ENCODE measurements at regions of chr11 and their contacts with region 1.

Region 1: DNA sequence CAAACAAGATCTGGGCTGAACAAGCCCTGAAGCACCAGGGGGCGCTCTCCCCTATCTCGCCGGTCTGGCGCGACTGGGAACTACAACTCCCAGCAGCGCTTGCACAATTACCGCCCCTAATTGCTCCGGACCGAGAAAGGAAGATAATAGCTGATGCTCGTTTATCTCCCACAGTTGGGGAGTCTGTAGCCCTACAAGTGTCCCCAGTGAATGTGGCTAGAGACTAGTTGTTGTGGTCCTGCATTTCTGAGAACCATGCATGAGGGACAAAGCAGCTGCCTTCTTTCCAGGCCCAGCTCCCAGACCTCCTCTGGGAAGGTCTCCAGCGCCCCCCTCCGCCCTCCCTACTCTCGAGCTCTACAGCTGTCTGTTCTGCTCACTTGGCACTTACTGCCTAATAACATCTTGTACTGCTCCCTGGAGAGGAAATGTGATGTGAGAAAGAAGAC is 34.4 kb downstream of the NRXN2 start:
- DNase-seq: peak; percentile 90 to 99
- H3K4me3 ChIP-seq: peak overlapping the region; percentile 50 to 83 (median 80); a peak in 7 of 8 replicates
- H3K27ac ChIP-seq: no peak overlapping the region
- H3K4me1 ChIP-seq: peaks cover 0 to 4% (median 0%) of the 10 kb centered on the region in 4 experiments; a peak in 2 of 7 replicates
- H3K27me3 ChIP-seq: no peaks in the 10 kb centered on the region
- CTCF ChIP-seq: peak; percentile 85 to 98 (median 92)
- EP300 ChIP-seq: no peak
- POLR2A ChIP-seq: no peak
- RAD21 ChIP-seq: peak; percentile 63 to 69

Region 2: DNA sequence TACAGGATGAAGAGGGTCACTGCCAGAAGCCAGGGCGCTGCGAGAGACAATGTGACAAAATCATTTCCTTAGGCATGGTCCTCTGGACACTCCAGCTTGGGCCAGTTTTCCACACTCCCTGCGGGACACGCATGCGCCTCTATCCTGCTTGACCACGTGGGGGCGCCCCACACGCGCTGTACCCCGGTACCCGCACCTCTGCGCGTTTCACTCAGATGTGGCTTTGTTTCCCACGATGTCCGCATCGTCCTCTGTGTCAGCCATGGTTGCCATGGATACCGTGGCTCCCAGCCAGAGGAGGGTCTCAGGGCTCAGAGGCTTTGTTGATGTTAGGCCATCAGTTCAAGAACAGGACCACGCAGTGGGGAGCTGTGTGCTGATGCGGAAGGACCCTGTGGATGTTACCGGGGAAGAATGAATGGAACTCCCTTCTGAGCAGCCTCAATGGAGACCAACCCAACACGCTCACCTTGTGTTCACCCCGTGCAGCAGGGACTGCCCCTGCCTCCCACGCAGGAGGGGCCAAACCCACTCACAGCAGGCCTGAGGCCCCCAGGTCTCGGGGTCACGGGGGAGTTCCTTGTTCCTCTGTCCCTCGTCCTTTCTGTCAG is 198.6 kb before region 1 on chr11:
- CTCF ChIA-PET with region 1: interaction called, 10 read pairs
- POLR2A ChIA-PET with region 1: no interaction called
- DNase-seq: peak; percentile 5 to 90
- H3K4me3 ChIP-seq: no peak overlapping the region
- H3K27ac ChIP-seq: no peak overlapping the region
- H3K4me1 ChIP-seq: no peaks in the 10 kb centered on the region; a peak in 2 of 7 replicates
- H3K27me3 ChIP-seq: peaks cover 3 to 21% (median 13%) of the 10 kb centered on the region in 4 experiments
- CTCF ChIP-seq: peak; percentile 82 to 95 (median 93)
- EP300 ChIP-seq: no peak
- POLR2A ChIP-seq: no peak
- RAD21 ChIP-seq: peak; percentile 89 to 91

Region 3: DNA sequence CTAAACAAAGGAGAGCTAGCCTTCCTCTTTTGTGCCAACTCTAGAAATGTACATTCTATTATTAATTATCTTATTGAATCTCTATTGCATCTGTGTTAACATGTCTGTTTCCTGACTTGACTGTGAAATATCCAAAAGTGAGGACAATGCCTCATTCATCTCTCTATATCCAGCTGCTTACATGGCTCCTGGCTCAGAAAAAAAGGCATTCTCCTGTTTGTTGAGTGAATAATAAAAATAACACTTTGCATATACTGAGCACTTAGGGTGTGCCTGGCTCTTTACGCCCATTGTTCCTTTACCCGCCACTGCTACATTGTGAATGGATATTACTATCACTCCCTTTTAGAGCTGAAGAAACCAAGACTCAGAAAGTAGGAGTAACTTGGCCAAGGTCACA is 14.5 kb after region 1 on chr11:
- CTCF ChIA-PET with region 1: interaction called, 41 read pairs
- POLR2A ChIA-PET with region 1: interaction called, 3 read pairs
- DNase-seq: no peak
- H3K4me3 ChIP-seq: no peak overlapping the region
- H3K27ac ChIP-seq: no peak overlapping the region
- H3K4me1 ChIP-seq: peaks cover 0 to 3% (median 2%) of the 10 kb centered on the region in 4 experiments; a peak in 3 of 7 replicates
- H3K27me3 ChIP-seq: 0 out of 7 replicates have a peak, but pooled peaks cover 0 to 2% (median 0%) of the 10 kb centered on the region in 4 experiments
- CTCF ChIP-seq: no peak
- EP300 ChIP-seq: no peak
- POLR2A ChIP-seq: no peak
- RAD21 ChIP-seq: no peak

Region 4: GRCh38 chr11:64723907-64724862 is 35.6 kb after region 1 on chr11:
- CTCF ChIA-PET with region 1: interaction called, 29 read pairs
- POLR2A ChIA-PET with region 1: interaction called, 5 read pairs
- DNase-seq: no peak
- H3K4me3 ChIP-seq: peak overlapping the region in 1 of 4 experiments; percentile 83; a peak in 4 of 8 replicates
- H3K27ac ChIP-seq: no peak overlapping the region
- H3K4me1 ChIP-seq: peaks cover 10 to 33% (median 25%) of the 10 kb centered on the region in 4 experiments
- H3K27me3 ChIP-seq: peaks cover 7 to 20% (median 16%) of the 10 kb centered on the region in 4 experiments
- CTCF ChIP-seq: no peak
- EP300 ChIP-seq: no peak
- POLR2A ChIP-seq: no peak
- RAD21 ChIP-seq: no peak

Region 5: GRCh38 chr11:64742889-64743590 is 54.5 kb after region 1 on chr11:
- CTCF ChIA-PET with region 1: interaction called, 41 read pairs
- POLR2A ChIA-PET with region 1: no interaction called
- DNase-seq: peak in 1 of 2 experiments; percentile 94
- H3K4me3 ChIP-seq: peak overlapping the region; percentile 46 to 67 (median 57)
- H3K27ac ChIP-seq: no peak overlapping the region
- H3K4me1 ChIP-seq: peaks cover 4 to 33% (median 29%) of the 10 kb centered on the region in 4 experiments
- H3K27me3 ChIP-seq: peaks cover 0 to 32% (median 19%) of the 10 kb centered on the region in 4 experiments; a peak in 5 of 7 replicates
- CTCF ChIP-seq: peak in 2 of 3 experiments; percentile 74; a peak in 3 of 4 replicates
- EP300 ChIP-seq: no peak
- POLR2A ChIP-seq: 0 out of 3 replicates have a peak, but pooled peaks of 1 of the 2 experiments have one; percentile 14
- RAD21 ChIP-seq: peak; percentile 56 to 74

Region 6: GRCh38 chr11:64772303-64773018 is 83.9 kb after region 1 on chr11:
- CTCF ChIA-PET with region 1: no interaction called
- POLR2A ChIA-PET with region 1: no interaction called
- DNase-seq: no peak
- H3K4me3 ChIP-seq: no peak overlapping the region
- H3K27ac ChIP-seq: no peak overlapping the region
- H3K4me1 ChIP-seq: peaks cover 1 to 6% (median 4%) of the 10 kb centered on the region in 4 experiments; a peak in 5 of 7 replicates
- H3K27me3 ChIP-seq: no peaks in the 10 kb centered on the region; a peak in 1 of 7 replicates
- CTCF ChIP-seq: no peak
- EP300 ChIP-seq: no peak
- POLR2A ChIP-seq: no peak; a peak in 1 of 3 replicates
- RAD21 ChIP-seq: no peak